Naive thymus-derived CD4-positive, alpha-beta T cell (primary cell): ENCODE measurements at regions of chr5 and their contacts with region 1.

Region 1: DNA sequence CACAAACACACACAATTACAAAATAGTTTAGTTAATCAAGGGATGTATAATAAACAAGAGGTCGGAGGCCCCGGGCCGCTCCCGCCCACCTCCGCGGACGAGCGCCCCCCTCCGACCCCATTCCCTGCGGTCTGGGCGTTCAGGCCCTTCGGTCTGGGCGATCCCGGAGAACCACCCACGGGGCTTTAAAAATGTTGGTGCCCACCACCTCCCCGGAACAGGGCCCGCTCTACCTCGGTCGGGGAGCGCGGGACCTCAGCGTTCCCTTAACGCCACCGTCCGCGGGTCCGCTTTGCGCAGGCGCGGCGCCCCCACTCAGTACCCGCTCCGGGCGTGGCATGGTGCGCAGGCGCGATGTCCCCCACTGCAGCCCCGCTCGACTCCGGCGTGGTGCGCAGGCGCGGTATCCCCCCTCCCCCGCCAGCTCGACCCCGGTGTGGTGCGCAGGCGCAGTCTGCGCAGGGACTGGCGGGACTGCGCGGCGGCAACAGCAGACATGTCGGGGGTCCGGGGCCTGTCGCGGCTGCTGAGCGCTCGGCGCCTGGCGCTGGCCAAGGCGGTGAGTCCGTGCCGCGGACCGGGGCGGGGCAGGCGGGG is at the starts of genes CCDC127 and SDHA:
- DNase-seq: peak; percentile 94 to 100 (median 98)
- ATAC-seq: peak; percentile 90
- H3K4me3 ChIP-seq: peak within 1 kb of the TSS; percentile 65
- H3K4me3 Mint-ChIP-seq: peak within 1 kb of the TSS; percentile 93 to 97 (median 96)
- H3K27ac ChIP-seq: peak within 1 kb of the TSS; percentile 92
- H3K27ac Mint-ChIP-seq: peak within 1 kb of the TSS; percentile 87 to 97 (median 95)
- H3K4me1 ChIP-seq: peaks cover 13 to 14% of the 10 kb centered on the region in 2 donors
- H3K4me1 Mint-ChIP-seq: peaks cover 44 to 69% (median 57%) of the 10 kb centered on the region in 7 donors
- H3K27me3 ChIP-seq: no peaks in the 10 kb centered on the region
- H3K27me3 Mint-ChIP-seq: peaks cover 0 to 2% (median 0%) of the 10 kb centered on the region in 5 donors
- total RNA-seq, gene CCDC127: 2.9 to 9.7 (median 6.5) TPM
- total RNA-seq, gene SDHA: 120 to 180 (median 148) TPM

Region 2: GRCh38 chr5:129820-130219 is 88.1 kb before region 1 on chr5:
- CTCF ChIA-PET with region 1: no interaction called
- POLR2A ChIA-PET with region 1: no interaction called
- intact Hi-C with region 1: no loop called
- DNase-seq: no peak
- ATAC-seq: no peak
- H3K4me3 ChIP-seq: no peak overlapping the region
- H3K4me3 Mint-ChIP-seq: no peak overlapping the region
- H3K27ac ChIP-seq: no peak overlapping the region
- H3K27ac Mint-ChIP-seq: no peak overlapping the region
- H3K4me1 ChIP-seq: no peaks in the 10 kb centered on the region
- H3K4me1 Mint-ChIP-seq: no peaks in the 10 kb centered on the region
- H3K27me3 ChIP-seq: no peaks in the 10 kb centered on the region
- H3K27me3 Mint-ChIP-seq: peaks cover 11 to 51% (median 29%) of the 10 kb centered on the region in 5 donors

Region 3: DNA sequence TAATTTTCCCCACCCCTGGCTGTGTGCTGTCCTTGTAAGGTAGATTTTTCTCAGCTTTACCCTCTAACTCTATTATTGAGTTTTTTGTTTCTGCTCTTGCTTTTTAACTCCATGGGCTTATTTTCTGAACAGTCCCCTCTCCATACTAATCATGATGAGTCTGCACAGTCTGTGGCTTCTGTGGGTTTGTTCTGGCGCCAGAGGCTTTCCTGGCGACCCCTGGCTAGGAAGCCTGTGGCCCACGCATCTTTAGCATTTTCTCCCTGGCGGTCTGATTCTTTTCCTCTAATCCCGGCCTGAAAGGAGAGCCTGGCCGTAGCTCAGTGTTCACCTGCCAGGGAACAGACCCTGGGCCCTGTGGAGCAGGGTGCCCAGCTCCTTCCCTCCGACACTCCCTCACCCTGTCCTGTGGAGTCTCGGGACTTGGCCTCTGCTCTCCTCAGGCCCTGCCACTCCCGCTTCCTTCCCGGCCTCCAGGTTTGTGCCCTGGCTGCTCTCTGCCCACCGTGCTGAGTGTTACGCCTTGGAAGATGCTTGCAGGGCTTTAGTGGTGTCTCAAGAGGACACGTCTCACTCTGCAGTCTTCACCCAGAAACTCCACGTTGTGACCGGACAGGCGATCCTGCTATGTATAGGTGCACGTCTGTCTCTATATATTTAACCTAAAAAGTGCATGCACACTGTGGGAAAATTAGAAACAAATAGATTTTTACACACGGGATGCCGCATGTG is 58.4 kb before region 1 on chr5:
- CTCF ChIA-PET with region 1: no interaction called
- POLR2A ChIA-PET with region 1: no interaction called
- intact Hi-C with region 1: no loop called
- DNase-seq: no peak
- ATAC-seq: no peak
- H3K4me3 ChIP-seq: no peak overlapping the region
- H3K4me3 Mint-ChIP-seq: no peak overlapping the region
- H3K27ac ChIP-seq: no peak overlapping the region
- H3K27ac Mint-ChIP-seq: peak overlapping the region in 1 of 9 donors; percentile 33
- H3K4me1 ChIP-seq: no peaks in the 10 kb centered on the region
- H3K4me1 Mint-ChIP-seq: no peaks in the 10 kb centered on the region
- H3K27me3 ChIP-seq: no peaks in the 10 kb centered on the region
- H3K27me3 Mint-ChIP-seq: peaks cover 3 to 30% (median 20%) of the 10 kb centered on the region in 5 donors

Region 4: GRCh38 chr5:247551-248249 is 29.7 kb after region 1 on chr5:
- CTCF ChIA-PET with region 1: no interaction called
- POLR2A ChIA-PET with region 1: interaction called, 7 read pairs
- intact Hi-C with region 1: loop called in 1 of 2 experiments (anchors 2 kb)
- DNase-seq: no peak
- ATAC-seq: no peak
- H3K4me3 ChIP-seq: no peak overlapping the region
- H3K4me3 Mint-ChIP-seq: no peak overlapping the region
- H3K27ac ChIP-seq: no peak overlapping the region
- H3K27ac Mint-ChIP-seq: no peak overlapping the region
- H3K4me1 ChIP-seq: peaks cover 0 to 1% of the 10 kb centered on the region in 2 donors
- H3K4me1 Mint-ChIP-seq: peaks cover 4 to 20% (median 17%) of the 10 kb centered on the region in 7 donors
- H3K27me3 ChIP-seq: no peaks in the 10 kb centered on the region
- H3K27me3 Mint-ChIP-seq: no peaks in the 10 kb centered on the region